ENCODE measurements at regions of chr2 and their contacts with region 1.

Region 1: DNA sequence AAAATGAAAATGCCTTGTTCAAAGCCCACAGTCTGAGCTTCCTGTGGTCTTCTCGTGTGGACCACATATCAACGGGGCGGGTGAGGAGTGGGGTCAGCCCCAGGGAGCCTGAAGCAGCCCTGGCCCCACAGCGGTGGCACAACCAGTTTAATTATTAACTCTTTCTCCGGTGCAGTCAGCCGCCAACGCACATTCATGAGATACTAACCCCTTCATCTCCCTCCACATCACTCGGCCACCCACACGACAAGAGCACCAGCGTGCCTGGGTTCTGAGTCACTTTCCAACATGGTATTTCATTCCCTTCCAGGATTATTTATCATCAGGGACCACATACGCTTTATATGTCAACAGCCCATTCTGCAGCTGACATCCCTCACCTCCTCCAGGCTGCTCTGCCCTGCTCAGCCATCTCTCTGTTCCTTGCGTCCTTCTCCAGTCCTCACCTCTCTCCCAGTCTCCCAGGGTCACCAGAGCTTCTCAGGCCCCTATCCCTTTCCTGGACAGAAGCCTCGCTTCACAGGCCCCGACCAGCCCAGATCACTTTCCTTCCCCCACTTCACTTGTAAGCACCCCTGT is 48.0 kb upstream of the ID2 start:
- DNase-seq: no peak
- H3K4me3 ChIP-seq: no peak overlapping the region
- H3K4me3 Mint-ChIP-seq: no peak overlapping the region
- H3K27ac ChIP-seq: no peak overlapping the region
- H3K27ac Mint-ChIP-seq: peak overlapping the region in 1 of 7 donors; percentile 60
- H3K4me1 ChIP-seq: no peaks in the 10 kb centered on the region
- H3K4me1 Mint-ChIP-seq: peaks cover 6% of the 10 kb centered on the region
- H3K27me3 ChIP-seq: no peaks in the 10 kb centered on the region
- H3K27me3 Mint-ChIP-seq: peaks cover 5 to 10% (median 7%) of the 10 kb centered on the region in 3 donors
- CTCF ChIP-seq: no peak

Region 2: GRCh38 chr2:8656160-8656641 is 22.4 kb after region 1 on chr2:
- intact Hi-C with region 1: no loop called
- DNase-seq: no peak
- H3K4me3 ChIP-seq: no peak overlapping the region
- H3K4me3 Mint-ChIP-seq: no peak overlapping the region
- H3K27ac ChIP-seq: no peak overlapping the region
- H3K27ac Mint-ChIP-seq: no peak overlapping the region
- H3K4me1 ChIP-seq: peaks cover 33 to 34% of the 10 kb centered on the region in 2 donors
- H3K4me1 Mint-ChIP-seq: peaks cover 38% of the 10 kb centered on the region
- H3K27me3 ChIP-seq: no peaks in the 10 kb centered on the region
- H3K27me3 Mint-ChIP-seq: peaks cover 3 to 12% (median 6%) of the 10 kb centered on the region in 3 donors
- CTCF ChIP-seq: no peak

Region 3: GRCh38 chr2:8669157-8669817 is 35.5 kb after region 1 on chr2:
- intact Hi-C with region 1: loop called in 1 of 2 experiments (anchors 5 kb)
- DNase-seq: no peak
- H3K4me3 ChIP-seq: no peak overlapping the region
- H3K4me3 Mint-ChIP-seq: no peak overlapping the region
- H3K27ac ChIP-seq: no peak overlapping the region
- H3K27ac Mint-ChIP-seq: no peak overlapping the region
- H3K4me1 ChIP-seq: no peaks in the 10 kb centered on the region
- H3K4me1 Mint-ChIP-seq: peaks cover 11% of the 10 kb centered on the region
- H3K27me3 ChIP-seq: no peaks in the 10 kb centered on the region
- H3K27me3 Mint-ChIP-seq: peaks cover 0 to 8% (median 4%) of the 10 kb centered on the region in 3 donors
- CTCF ChIP-seq: no peak

Measured in CD14-positive monocyte (primary cell).